Activated T-helper 1 cell treated with anti-CD3 and anti-CD28 coated beads, Interleukin-12 subunit alpha, Interleukin-12 subunit beta, Interleukin-2, Interleukin-4 antibody, amounts not matched to agents 30 ng/mL and 10 ng/mL and 1 ng/mL, durations not matched to agents 14 hours and 24 hours and 36 hours (primary cell): ENCODE measurements at regions of chr9 and their contacts with region 1.

Region 1: GRCh38 chr9:75200892-75201470 is 112.7 kb downstream of the OSTF1 start:
- DNase-seq: no peak
- H3K4me3 Mint-ChIP-seq: no peak overlapping the region
- H3K27ac Mint-ChIP-seq: peak overlapping the region; percentile 0
- H3K4me1 Mint-ChIP-seq: peaks cover 8% of the 10 kb centered on the region
- H3K27me3 Mint-ChIP-seq: no peaks in the 10 kb centered on the region

Region 2: DNA sequence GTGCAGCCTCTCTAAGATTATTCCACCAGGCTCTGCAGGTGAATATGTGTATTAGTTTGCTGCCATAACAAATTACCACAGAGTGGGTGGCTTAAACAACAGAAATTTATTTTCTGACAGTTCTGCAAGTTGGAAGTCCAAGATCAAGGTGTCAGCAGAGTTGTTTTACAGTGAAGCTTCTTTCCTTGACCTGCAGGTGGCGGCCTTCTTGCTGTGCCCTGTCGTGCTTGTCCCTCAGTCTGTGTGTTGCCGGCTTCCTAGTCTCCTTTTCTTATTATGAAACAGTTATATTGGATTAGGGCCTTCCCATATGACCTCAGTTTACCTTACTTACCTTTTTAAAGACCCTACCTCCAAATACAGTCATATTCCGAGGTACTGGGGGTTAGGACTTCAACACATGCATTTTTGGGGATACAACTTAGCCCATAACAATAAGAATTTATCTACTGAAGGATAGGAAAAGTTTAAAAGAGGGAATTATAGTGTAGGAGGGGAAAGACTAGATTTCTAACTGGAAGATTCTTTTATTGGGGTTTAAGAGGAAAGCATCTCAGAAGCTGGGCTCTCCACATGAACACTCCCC is 15.3 kb before region 1 on chr9:
- intact Hi-C with region 1: loop called (anchors 2 kb)
- DNase-seq: peak; percentile 11
- H3K4me3 Mint-ChIP-seq: no peak overlapping the region
- H3K27ac Mint-ChIP-seq: no peak overlapping the region
- H3K4me1 Mint-ChIP-seq: peaks cover 27% of the 10 kb centered on the region
- H3K27me3 Mint-ChIP-seq: no peaks in the 10 kb centered on the region

Region 3: DNA sequence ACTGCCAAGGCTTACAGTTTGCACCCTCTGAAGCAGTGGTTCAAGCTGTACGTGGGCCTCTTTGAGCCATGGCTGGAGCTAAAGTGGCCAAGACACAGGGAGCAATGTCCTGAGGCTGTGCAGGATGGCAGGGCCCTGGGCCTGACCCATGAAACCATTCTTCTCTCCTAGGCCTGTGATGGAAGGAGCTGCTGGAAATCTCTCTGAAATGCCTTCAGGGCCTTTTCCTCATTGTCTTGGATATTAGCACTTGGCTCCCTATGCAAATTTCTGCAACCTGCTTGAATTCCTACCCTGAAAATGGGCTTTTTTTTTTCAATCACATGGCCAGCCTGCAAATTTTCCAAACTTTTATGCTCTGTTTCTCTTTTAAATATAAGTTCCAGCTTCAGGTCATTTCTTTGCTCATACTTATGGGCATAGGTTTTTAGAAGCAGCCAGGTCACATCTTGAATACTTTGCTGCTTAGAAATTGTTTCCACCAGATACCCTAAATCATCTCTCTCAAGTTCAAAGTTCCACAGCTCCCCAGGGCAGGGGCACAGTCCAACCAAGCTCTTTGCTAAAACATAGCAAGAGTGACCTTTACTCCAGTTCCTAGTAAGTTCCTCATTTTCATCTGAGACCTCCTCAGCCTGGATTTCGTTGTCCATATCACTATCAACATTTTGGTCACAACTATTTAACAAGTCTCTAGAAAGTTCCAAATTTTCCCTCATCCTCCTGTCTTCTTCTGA is 25.6 kb after region 1 on chr9:
- intact Hi-C with region 1: no loop called
- DNase-seq: no peak
- H3K4me3 Mint-ChIP-seq: no peak overlapping the region
- H3K27ac Mint-ChIP-seq: no peak overlapping the region
- H3K4me1 Mint-ChIP-seq: no peaks in the 10 kb centered on the region
- H3K27me3 Mint-ChIP-seq: peaks cover 6% of the 10 kb centered on the region

Region 4: GRCh38 chr9:75238311-75238978 is 37.5 kb after region 1 on chr9:
- intact Hi-C with region 1: loop called (anchors 1 kb)
- DNase-seq: peak; percentile 10
- H3K4me3 Mint-ChIP-seq: no peak overlapping the region
- H3K27ac Mint-ChIP-seq: no peak overlapping the region
- H3K4me1 Mint-ChIP-seq: no peaks in the 10 kb centered on the region
- H3K27me3 Mint-ChIP-seq: peaks cover 4% of the 10 kb centered on the region

Region 5: DNA sequence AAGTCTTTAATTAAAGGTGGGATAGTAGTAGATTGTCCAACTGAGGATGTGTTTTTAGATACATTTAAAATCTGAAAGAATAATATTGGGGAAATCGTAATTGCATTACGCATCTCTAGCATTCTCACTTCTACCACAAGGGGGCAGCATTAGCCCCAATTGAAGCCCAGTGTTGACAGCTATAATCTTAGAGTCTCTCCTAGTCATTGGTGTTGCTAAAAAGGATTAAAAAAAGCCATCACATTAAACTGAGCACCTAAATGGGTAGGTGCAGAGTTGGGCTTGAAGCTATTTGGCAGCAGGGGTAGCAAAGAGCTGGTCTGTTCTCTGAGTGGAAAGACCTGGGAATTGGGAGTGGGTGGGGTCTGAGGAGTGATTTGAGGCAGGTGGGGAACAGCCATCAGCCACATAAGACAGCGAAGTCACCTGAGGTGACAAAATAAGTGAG is 64.6 kb after region 1 on chr9:
- intact Hi-C with region 1: loop called (anchors 1 kb)
- DNase-seq: peak; percentile 4
- H3K4me3 Mint-ChIP-seq: no peak overlapping the region
- H3K27ac Mint-ChIP-seq: no peak overlapping the region
- H3K4me1 Mint-ChIP-seq: peaks cover 4% of the 10 kb centered on the region
- H3K27me3 Mint-ChIP-seq: peaks cover 1% of the 10 kb centered on the region

Region 6: DNA sequence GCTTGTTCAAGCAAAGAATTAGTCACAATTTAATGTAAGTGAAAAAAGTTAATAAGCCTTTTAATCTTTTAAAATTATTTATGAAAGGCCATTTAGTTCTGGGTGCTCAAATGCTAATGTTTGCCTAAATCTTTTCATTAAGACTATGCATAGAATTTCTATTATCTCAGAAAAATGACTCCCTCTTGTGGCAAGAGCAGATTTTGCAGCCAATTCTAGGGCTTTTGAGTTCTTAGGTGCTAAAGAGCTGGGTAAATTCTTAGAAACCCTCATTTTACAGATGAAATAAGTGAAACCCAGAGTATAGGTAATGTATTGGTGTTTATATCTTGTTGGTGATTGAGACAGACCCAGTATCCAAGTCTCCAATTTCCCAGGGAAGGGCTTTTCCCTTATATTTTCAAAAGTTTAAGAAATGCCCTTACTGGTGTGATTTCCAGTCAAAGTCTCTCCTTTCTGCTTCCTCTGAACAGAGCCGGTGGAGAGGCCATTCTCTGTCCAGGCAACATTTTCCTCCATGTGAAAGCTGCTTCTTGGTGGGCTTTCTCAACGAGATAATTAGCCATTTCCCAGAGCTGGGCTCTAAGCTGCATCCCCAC is 665.4 kb after region 1 on chr9:
- intact Hi-C with region 1: loop called (anchors 1 kb)
- DNase-seq: no peak
- H3K4me3 Mint-ChIP-seq: no peak overlapping the region
- H3K27ac Mint-ChIP-seq: no peak overlapping the region
- H3K4me1 Mint-ChIP-seq: no peaks in the 10 kb centered on the region
- H3K27me3 Mint-ChIP-seq: peaks cover 3% of the 10 kb centered on the region